Adrenal gland (tissue), 19 donors: ENCODE measurements at regions of chr10 and their contacts with region 1.

Region 1: DNA sequence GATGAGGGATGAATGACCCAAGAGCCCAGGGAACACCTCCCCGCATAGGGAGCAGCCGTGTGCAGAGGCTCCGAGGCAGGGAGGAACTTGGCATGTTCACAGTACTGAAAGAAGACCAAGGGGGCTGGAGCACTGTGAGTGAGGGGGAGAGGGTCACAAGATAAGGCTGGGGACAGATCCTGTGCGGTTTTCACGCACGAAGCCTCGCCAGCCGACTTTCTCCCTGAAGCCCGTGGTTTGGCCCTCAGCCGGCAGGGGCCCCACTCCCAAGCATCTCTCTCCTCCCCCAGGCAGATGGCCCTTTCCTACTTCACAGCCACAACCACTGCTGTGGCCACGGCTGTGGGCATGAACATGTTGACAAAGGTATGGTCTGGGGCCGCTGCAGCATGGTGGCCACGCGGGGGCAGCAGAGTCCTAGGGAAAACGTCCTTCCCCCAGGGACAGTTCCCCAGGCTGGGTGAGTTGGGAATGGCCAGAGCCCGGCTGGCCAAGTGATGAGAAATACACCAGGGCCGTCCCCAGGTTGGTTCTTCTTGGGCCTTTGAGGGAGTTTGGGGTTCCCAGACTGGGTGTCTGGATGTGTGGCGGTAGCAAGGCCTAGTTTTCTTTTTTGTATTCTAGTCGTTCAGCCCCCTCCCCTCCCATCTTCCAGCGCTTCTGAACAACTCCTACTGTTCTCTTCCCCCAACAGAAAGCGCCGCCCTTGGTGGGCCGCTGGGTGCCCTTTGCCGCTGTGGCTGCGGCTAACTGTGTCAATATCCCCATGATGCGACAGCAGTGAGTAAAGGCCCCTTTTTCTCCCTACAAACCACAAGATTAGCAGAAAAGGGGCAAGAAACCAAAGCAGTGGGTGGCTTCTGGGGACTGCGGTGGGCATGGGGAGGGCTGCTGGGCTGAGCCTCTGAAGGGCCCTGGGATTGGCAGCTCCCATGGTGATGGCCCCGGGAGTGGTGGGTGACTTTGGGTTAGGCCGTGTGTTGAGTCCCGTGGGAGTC is 14.4 kb upstream of the WBP1L start:
- DNase-seq: peak; percentile 89 to 96 (median 93)
- H3K4me3 ChIP-seq: no peak overlapping the region
- H3K27ac ChIP-seq: peak overlapping the region in 1 of 5 donors; percentile 49
- H3K4me1 ChIP-seq: peaks cover 0 to 25% of the 10 kb centered on the region in 2 donors
- H3K27me3 ChIP-seq: no peaks in the 10 kb centered on the region
- CTCF ChIP-seq: peak; percentile 88 to 98 (median 94)
- POLR2A ChIP-seq: no peak

Region 2: DNA sequence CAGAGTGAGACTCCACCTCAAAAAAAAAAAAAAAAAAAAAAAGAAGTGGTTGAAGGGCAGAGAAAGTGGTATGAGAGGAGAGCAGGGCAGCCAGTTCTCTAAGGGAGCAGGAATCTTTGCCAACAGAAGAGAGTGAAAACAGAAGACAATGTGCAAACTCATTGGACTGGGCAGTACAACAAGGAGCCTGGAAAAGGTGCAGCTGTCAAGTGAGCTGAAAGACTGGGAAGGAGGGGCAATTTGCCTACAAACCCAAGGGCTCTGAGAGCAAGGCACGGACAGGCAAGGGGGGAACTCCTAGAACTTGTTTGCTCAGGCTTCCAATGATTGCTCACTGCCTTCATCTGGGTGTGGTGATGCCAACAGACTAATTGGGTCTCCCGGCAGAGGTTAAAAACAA is 236.3 kb before region 1 on chr10:
- intact Hi-C with region 1: no loop called
- DNase-seq: peak in 4 of 7 donors; percentile 21 to 52 (median 36)
- H3K4me3 ChIP-seq: no peak overlapping the region
- H3K27ac ChIP-seq: no peak overlapping the region
- H3K4me1 ChIP-seq: peaks cover 0 to 17% of the 10 kb centered on the region in 2 donors
- H3K27me3 ChIP-seq: no peaks in the 10 kb centered on the region
- CTCF ChIP-seq: no peak
- POLR2A ChIP-seq: no peak

Region 3: GRCh38 chr10:102546606-102547320 is 182.6 kb before region 1 on chr10:
- intact Hi-C with region 1: no loop called
- DNase-seq: no peak
- H3K4me3 ChIP-seq: no peak overlapping the region
- H3K27ac ChIP-seq: no peak overlapping the region
- H3K4me1 ChIP-seq: peaks cover 0 to 16% of the 10 kb centered on the region in 2 donors
- H3K27me3 ChIP-seq: no peaks in the 10 kb centered on the region
- CTCF ChIP-seq: no peak
- POLR2A ChIP-seq: no peak

Region 4: GRCh38 chr10:102822222-102822621 is 92.9 kb after region 1 on chr10:
- intact Hi-C with region 1: loop called (anchors 10 kb)
- DNase-seq: no peak
- H3K4me3 ChIP-seq: no peak overlapping the region
- H3K27ac ChIP-seq: no peak overlapping the region
- H3K4me1 ChIP-seq: peaks cover 0 to under 1% of the 10 kb centered on the region in 2 donors
- H3K27me3 ChIP-seq: no peaks in the 10 kb centered on the region
- CTCF ChIP-seq: no peak
- POLR2A ChIP-seq: no peak

Region 5: GRCh38 chr10:102894466-102895213 is 165.3 kb after region 1 on chr10:
- intact Hi-C with region 1: loop called in 1 of 2 experiments (anchors 5 kb)
- DNase-seq: no peak
- H3K4me3 ChIP-seq: no peak overlapping the region
- H3K27ac ChIP-seq: no peak overlapping the region
- H3K4me1 ChIP-seq: peaks cover 9 to 10% of the 10 kb centered on the region in 2 donors
- H3K27me3 ChIP-seq: no peaks in the 10 kb centered on the region
- CTCF ChIP-seq: no peak
- POLR2A ChIP-seq: no peak

Region 6: DNA sequence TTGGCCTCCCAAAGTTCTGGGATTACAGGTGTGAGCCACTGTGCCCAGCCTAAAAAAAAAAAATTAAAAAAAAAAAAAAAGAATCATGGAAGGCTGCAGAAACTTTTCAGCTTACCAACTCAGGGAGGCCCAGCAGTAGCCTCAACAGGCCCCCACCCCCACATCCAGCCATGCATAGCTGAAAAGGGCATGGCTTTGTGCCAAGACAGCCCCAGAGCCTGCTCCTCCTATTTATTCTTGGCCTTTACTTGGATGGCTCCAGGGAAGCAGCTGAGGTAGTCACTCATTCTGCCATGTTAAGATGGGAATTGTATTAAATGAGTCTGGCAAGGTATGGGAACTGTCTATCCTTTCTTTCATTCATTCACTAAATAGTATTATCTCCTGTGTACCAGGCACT is 175.0 kb after region 1 on chr10:
- intact Hi-C with region 1: loop called (anchors 5 kb)
- DNase-seq: peak; percentile 42 to 71 (median 66)
- H3K4me3 ChIP-seq: no peak overlapping the region
- H3K27ac ChIP-seq: no peak overlapping the region
- H3K4me1 ChIP-seq: peaks cover 0 to 2% of the 10 kb centered on the region in 2 donors
- H3K27me3 ChIP-seq: no peaks in the 10 kb centered on the region
- CTCF ChIP-seq: no peak
- POLR2A ChIP-seq: no peak